ENCODE measurements at regions of chr6 and their contacts with region 1.

Region 1: GRCh38 chr6:34036357-34037069 is 109.4 kb downstream of the GRM4 start:
- DNase-seq: no peak
- H3K4me3 Mint-ChIP-seq: no peak overlapping the region
- H3K27ac Mint-ChIP-seq: no peak overlapping the region
- H3K4me1 Mint-ChIP-seq: no peaks in the 10 kb centered on the region
- H3K27me3 Mint-ChIP-seq: peaks cover 92% of the 10 kb centered on the region
- CTCF ChIP-seq: no peak

Region 2: DNA sequence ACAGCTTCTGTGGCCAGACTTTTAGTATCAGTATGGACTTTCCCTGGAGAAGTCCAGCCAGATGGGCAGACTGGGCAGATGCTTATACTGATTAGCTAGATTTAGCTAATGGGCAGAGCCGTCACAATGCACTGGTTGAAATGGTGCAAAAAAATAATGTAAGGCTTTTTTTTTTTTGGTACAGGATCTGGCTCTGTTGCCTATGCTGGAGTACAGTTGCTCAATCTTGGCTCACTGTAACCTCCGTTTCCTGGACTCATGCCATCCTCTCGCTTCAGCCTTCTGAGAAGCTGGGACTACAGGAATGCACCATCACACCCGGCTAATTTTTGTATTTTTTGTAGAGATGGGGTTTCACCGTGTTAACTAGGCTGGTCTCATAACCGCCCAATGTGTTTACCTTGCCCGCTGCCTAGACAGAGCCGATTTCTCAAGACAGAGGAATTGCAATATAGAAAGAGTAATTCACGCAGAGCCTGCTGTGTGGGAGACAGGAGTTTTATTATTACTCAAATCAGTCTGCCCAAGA is 661.3 kb before region 1 on chr6:
- CTCF ChIA-PET with region 1: interaction called, 10 read pairs
- intact Hi-C with region 1: no loop called
- DNase-seq: peak; percentile 78
- H3K4me3 Mint-ChIP-seq: no peak overlapping the region
- H3K27ac Mint-ChIP-seq: no peak overlapping the region
- H3K4me1 Mint-ChIP-seq: peaks cover 26% of the 10 kb centered on the region
- H3K27me3 Mint-ChIP-seq: no peaks in the 10 kb centered on the region
- CTCF ChIP-seq: no peak

Measured in Calu3 (cell line).